Calu3 (cell line): ENCODE measurements at regions of chr10 and their contacts with region 1.

Region 1: GRCh38 chr10:110395725-110396651 is 91.3 kb upstream of the SMNDC1 start:
- DNase-seq: peak; percentile 75
- H3K4me3 Mint-ChIP-seq: peak overlapping the region; percentile 39
- H3K27ac Mint-ChIP-seq: peak overlapping the region; percentile 98
- H3K4me1 Mint-ChIP-seq: peaks cover 59% of the 10 kb centered on the region
- H3K27me3 Mint-ChIP-seq: no peaks in the 10 kb centered on the region
- CTCF ChIP-seq: no peak

Region 2: GRCh38 chr10:110311357-110311949 is 84.5 kb before region 1 on chr10:
- CTCF ChIA-PET with region 1: interaction called, 3 read pairs
- intact Hi-C with region 1: loop called (anchors 5 kb)
- DNase-seq: peak; percentile 33
- H3K4me3 Mint-ChIP-seq: no peak overlapping the region
- H3K27ac Mint-ChIP-seq: no peak overlapping the region
- H3K4me1 Mint-ChIP-seq: no peaks in the 10 kb centered on the region
- H3K27me3 Mint-ChIP-seq: no peaks in the 10 kb centered on the region
- CTCF ChIP-seq: no peak

Region 3: DNA sequence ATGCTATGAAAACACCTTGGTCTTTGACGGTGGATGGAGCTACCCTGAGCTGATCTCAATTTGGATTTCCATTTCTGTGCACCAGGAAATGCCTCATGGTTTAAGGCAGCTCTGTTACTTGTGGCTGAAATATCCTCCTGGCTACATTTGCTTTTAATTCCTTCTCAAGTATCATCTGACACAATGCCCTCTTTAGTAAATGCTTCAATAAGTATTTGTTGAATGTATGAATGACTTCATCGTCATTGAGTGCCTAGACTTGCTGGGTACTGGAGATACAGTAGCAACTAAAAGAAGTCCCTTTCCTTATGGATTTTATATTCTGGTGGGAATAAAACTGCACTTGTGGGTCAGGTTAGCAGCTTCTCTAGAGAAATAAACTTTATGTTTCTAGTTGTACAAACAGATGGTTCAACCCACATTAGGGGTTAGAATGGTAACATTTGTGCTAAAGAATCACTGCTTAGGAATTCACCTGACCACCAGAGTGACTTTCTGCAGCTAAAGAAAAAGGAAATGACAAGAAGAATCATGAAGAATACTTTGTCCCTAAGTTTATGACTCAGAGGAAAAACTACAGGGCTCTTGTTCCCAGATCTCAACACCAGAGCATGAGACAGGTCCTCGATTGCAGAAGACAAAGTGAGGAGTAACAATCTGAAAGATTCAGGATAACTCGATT is 69.5 kb before region 1 on chr10:
- CTCF ChIA-PET with region 1: interaction called, 4 read pairs
- intact Hi-C with region 1: loop called (anchors 2 kb)
- DNase-seq: no peak
- H3K4me3 Mint-ChIP-seq: peak overlapping the region; percentile 50
- H3K27ac Mint-ChIP-seq: peak overlapping the region; percentile 92
- H3K4me1 Mint-ChIP-seq: peaks cover 41% of the 10 kb centered on the region
- H3K27me3 Mint-ChIP-seq: no peaks in the 10 kb centered on the region
- CTCF ChIP-seq: no peak

Region 4: DNA sequence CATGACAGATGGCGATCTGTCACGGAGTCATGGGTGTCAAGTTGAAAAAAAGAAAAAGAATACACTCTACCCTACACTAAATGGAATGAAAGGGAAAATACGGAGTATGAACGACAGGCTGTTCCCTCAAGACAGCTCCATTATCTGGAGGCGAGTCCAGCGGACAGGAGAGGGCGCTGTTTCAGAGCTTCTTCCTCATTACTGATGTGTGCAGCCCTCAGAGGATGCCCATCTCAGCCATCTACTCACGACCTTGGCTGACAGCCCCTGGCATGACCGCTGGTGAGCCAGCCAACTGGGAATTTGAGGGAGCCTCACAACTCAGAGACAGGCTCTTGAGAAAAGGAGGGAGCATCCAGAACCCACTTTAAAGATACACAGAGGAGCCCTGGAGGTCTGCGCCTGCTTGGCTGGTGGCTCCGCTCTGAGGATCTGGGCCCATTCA is 41.6 kb before region 1 on chr10:
- CTCF ChIA-PET with region 1: interaction called, 7 read pairs
- intact Hi-C with region 1: loop called (anchors 5 kb)
- DNase-seq: peak; percentile 72
- H3K4me3 Mint-ChIP-seq: no peak overlapping the region
- H3K27ac Mint-ChIP-seq: no peak overlapping the region
- H3K4me1 Mint-ChIP-seq: peaks cover 33% of the 10 kb centered on the region
- H3K27me3 Mint-ChIP-seq: no peaks in the 10 kb centered on the region
- CTCF ChIP-seq: peak; percentile 33

Region 5: GRCh38 chr10:110414563-110415309 is 18.7 kb after region 1 on chr10:
- CTCF ChIA-PET with region 1: interaction called, 7 read pairs
- intact Hi-C with region 1: loop called (anchors 1 kb)
- DNase-seq: peak; percentile 84
- H3K4me3 Mint-ChIP-seq: peak overlapping the region; percentile 36
- H3K27ac Mint-ChIP-seq: peak overlapping the region; percentile 96
- H3K4me1 Mint-ChIP-seq: peaks cover 67% of the 10 kb centered on the region
- H3K27me3 Mint-ChIP-seq: no peaks in the 10 kb centered on the region
- CTCF ChIP-seq: no peak

Region 6: DNA sequence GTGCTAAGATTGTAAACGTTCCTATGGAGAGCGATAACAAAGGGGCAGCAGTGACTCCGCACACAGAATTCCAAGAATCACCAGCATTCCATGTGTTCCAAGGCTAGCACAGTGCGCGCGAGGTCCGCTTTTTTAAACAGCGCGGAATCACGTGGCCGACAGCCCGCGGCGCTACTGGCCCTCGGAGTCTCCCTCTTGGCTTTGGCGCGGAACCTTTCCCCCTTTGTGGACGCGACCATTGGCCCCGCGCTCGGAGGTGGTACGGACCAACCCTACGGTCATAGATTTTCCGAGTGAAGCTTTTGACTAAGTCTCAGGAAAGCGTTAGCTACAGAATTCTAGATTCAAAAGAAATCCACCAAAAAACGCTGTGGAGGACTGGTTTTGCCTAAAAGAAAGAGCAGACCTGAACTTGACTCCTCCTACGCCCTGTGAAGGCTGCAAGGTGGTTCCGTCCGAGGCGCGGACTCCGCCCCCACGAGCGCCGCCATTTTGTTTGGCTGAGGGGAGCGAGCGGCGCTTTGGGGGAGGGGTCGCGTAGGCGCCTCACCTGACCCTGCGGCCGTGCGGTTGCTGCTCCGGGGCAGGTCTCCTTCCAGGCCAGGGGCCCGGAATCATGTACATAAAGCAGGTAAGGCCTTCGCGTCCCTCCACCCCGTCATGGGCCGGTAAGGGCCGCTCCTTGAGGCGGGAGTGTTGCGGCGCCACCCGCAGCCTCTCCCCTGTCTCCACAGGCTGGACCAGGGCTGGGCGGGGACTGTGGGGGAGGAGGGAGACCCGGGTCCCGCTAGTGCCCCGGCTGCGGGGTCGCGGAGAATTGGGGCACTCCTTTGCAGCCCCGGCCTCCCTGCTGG is 171.4 kb after region 1 on chr10 and contains the start of gene SMC3:
- CTCF ChIA-PET with region 1: no interaction called
- intact Hi-C with region 1: no loop called
- DNase-seq: peak; percentile 86
- H3K4me3 Mint-ChIP-seq: peak within 1 kb of the TSS; percentile 88
- H3K27ac Mint-ChIP-seq: peak within 1 kb of the TSS; percentile 97
- H3K4me1 Mint-ChIP-seq: peaks cover 17% of the 10 kb centered on the region
- H3K27me3 Mint-ChIP-seq: no peaks in the 10 kb centered on the region
- CTCF ChIP-seq: no peak
- total RNA-seq, gene SMC3: 26.3 and 31.3 TPM in 2 replicates

Region 7: DNA sequence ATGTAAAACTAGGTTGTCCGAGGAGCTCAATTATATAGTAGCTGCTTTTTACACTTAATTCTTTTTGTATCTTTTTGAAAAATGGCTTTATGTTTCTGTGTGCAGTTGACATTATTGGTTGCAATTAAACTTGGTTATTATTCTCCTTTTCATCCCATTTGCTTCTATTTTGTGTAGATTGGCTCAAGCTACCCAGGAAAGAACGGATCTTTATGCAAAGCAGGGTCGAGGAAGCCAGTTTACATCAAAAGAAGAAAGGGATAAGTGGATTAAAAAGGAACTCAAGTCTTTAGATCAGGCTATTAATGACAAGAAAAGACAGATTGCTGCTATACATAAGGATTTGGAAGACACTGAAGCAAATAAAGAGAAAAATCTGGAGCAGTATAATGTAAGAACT is 188.0 kb after region 1 on chr10:
- CTCF ChIA-PET with region 1: no interaction called
- intact Hi-C with region 1: no loop called
- DNase-seq: no peak
- H3K4me3 Mint-ChIP-seq: no peak overlapping the region
- H3K27ac Mint-ChIP-seq: no peak overlapping the region
- H3K4me1 Mint-ChIP-seq: no peaks in the 10 kb centered on the region
- H3K27me3 Mint-ChIP-seq: no peaks in the 10 kb centered on the region
- CTCF ChIP-seq: no peak